ENCODE measurements at regions of chr1 and their contacts with region 1.

Region 1: DNA sequence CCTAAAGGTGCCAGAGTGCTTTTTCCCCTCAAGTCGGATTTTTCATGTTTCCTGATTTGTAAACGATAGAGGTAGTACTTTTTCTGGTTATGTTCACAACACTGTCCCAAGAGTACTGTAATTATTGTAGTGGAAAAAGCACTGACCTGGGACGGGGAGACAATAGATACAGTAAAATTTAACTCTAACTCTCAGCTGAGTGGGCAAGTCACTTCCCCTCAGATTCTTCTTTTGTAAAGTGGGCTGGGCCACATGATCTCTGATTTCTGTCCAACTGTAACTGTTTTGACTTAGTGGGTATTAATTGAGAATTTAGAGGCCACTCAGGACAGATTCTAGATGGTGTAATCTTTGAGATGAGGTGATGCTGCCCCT is 19.1 kb downstream of the MARCKSL1 start:
- DNase-seq: no peak
- H3K4me3 ChIP-seq: no peak overlapping the region
- H3K27ac ChIP-seq: no peak overlapping the region
- H3K4me1 ChIP-seq: peaks cover 0 to 8% of the 10 kb centered on the region in 2 donors
- H3K27me3 ChIP-seq: no peaks in the 10 kb centered on the region
- CTCF ChIP-seq: no peak
- POLR2A ChIP-seq: no peak

Region 2: DNA sequence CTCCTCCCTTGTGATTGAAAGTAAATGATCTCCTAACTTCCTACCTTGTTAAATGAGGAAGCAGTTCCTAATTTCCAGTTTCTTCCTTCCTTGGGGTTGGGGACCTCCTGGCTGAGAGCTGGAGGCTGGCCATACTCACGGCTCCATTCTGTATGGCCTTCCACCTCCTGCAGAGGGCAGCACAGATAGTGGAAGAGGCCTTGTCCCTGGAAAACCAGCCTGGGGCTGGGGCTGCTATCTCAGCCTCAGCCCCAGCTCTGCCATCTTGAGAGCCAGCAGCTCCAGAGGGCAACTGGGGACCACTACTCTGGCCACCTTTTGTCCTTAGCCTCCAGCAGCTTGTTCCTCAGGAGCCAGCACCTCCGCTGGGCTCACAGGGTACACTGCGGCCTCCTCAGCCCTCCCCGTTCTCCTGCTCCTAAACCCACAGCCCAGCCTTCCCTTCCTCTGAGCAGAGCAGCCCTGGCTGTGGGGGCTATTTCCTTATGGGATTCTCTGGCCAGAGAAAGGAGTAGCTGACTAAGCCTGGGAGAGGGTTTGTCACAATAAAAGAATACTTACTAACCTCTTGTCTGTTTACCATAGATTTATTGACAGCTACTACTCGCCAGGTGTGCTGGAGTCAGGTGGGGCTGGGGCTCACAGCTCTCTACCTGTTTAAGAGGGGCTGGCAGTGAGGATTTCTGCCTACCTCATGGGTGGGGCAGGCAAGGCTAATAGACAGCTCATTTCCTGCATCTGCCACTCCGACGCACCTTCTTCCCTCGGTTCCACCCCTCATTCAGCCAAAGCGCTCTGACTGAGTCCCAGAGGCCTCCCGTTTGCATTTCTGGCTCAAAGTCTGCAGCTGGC is 101.0 kb before region 1 on chr1:
- intact Hi-C with region 1: loop called in 1 of 2 experiments (anchors 10 kb)
- DNase-seq: peak; percentile 65 to 84 (median 76)
- H3K4me3 ChIP-seq: no peak overlapping the region
- H3K27ac ChIP-seq: peak overlapping the region in 2 of 5 donors; percentile 49 to 52
- H3K4me1 ChIP-seq: peaks cover 0 to 16% of the 10 kb centered on the region in 2 donors
- H3K27me3 ChIP-seq: no peaks in the 10 kb centered on the region
- CTCF ChIP-seq: peak; percentile 57 to 81 (median 75)
- POLR2A ChIP-seq: no peak

Region 3: GRCh38 chr1:32426489-32427255 is 109.8 kb after region 1 on chr1:
- intact Hi-C with region 1: no loop called
- DNase-seq: peak in 3 of 7 donors; percentile 8 to 56 (median 10)
- H3K4me3 ChIP-seq: peak overlapping the region in 1 of 4 donors; percentile 32
- H3K27ac ChIP-seq: no peak overlapping the region
- H3K4me1 ChIP-seq: no peaks in the 10 kb centered on the region
- H3K27me3 ChIP-seq: peaks cover 6% of the 10 kb centered on the region
- CTCF ChIP-seq: no peak
- POLR2A ChIP-seq: no peak

Region 4: DNA sequence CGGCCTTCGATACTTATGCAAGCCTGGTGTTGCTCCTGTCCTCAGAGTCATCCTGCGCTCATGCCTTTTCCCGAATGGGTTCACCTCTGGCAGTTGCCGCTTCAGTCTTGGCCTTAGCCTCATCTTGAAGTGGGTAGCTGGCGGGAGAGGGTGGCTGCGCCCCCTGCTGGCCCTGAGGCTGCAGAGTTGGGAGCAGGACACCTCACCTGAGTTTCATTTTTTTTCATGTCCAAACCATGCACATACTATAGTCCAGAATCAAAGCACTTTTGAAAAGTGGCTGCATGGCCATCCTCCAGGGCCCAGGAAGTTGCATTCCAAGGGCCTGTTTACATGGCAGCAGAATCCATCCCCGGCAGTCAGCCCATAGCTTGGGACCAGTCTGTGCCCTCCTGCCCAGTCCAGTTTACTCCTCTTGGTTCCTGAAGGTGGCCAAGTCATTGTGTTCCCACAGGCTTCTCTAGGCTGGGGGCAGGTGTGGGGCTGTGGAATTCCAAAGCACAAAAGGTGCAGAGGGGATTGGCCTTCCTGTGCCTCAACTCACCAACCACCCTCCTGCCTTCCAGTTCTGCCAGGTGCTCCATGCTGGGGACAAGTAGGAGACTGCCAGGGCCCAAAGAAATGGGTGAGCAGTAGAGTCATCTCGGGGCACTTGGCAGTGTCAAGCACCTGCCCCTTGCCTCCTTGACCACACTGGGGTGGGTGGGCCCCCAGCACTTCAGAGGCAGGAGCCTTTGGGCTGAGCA is 456.3 kb after region 1 on chr1:
- intact Hi-C with region 1: no loop called
- DNase-seq: peak; percentile 84 to 95 (median 92)
- H3K4me3 ChIP-seq: no peak overlapping the region
- H3K27ac ChIP-seq: peak overlapping the region in 4 of 5 donors; percentile 26 to 84 (median 70)
- H3K4me1 ChIP-seq: peaks cover 29 to 53% of the 10 kb centered on the region in 2 donors
- H3K27me3 ChIP-seq: no peaks in the 10 kb centered on the region
- CTCF ChIP-seq: peak; percentile 93 to 96 (median 94)
- POLR2A ChIP-seq: peak in 1 of 2 donors; percentile 40